Lower leg skin (tissue), 4 donors: ENCODE measurements at regions of chr10 and their contacts with region 1.

Region 1: DNA sequence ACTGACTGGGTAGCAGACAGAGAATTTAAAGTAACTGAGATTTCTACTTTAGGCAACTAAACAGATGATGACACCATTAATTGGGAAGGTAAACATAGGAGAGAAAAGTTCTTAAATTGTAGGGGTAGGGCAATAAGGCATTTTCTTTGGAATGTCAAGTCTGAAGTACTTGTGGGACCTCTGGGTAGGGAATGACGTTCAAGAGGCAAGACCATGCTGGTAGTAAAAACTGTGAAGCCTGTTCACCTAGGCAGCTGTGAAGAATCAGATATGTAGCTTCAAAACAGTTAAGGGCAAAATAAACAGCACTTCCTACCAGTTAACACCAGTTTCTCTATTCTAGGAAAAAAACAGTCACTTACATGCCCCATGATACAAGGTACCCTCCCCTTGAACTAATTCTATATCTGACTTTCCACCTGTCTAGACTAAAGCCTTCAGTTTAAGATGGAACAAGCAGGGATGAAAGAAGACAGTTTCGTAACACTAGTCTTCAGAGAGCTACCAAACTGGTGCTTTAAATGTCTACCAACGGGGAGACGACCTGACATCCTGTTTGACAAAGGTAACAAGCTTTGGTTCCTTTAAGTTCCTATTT is 63.1 kb upstream of the KCNIP2 start:
- DNase-seq: no peak
- H3K4me3 ChIP-seq: no peak overlapping the region
- CTCF ChIP-seq: no peak
- POLR2A ChIP-seq: no peak

Region 2: GRCh38 chr10:101938316-101939281 is 31.9 kb after region 1 on chr10:
- intact Hi-C with region 1: loop called (anchors 1 kb)
- DNase-seq: no peak
- H3K4me3 ChIP-seq: no peak overlapping the region
- CTCF ChIP-seq: no peak
- POLR2A ChIP-seq: no peak

Region 3: GRCh38 chr10:103281753-103282152 is 1375.1 kb after region 1 on chr10:
- intact Hi-C with region 1: no loop called
- DNase-seq: no peak
- H3K4me3 ChIP-seq: no peak overlapping the region
- CTCF ChIP-seq: no peak
- POLR2A ChIP-seq: no peak